Activated CD4-positive, alpha-beta T cell treated with anti-CD3 and anti-CD28 coated beads for 36 hours (primary cell): ENCODE measurements at regions of chr1 and their contacts with region 1.

Region 1: DNA sequence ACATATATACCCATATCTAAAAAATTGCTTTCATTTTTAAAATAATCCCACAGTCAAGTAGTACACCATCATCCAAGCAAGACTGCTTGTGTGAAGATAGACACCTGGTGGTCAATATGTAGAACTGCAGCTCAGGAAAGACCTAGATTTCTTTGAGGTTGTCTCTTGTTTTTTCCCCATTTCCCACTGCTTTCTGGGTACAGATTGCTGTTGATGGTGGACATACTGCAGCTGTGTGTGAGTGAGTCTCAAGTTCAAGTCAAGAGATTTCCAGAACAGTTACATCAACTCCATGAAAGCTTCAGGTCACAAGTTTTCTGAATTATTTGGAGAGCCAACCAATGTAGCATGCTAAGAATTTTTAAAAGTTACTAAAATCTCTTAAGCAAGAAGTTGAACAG is 306.4 kb downstream of the DUSP10 start:
- DNase-seq: no peak
- ATAC-seq: no peak
- H3K4me3 Mint-ChIP-seq: no peak overlapping the region
- H3K27ac Mint-ChIP-seq: no peak overlapping the region
- H3K4me1 Mint-ChIP-seq: peaks cover 39% of the 10 kb centered on the region
- H3K27me3 Mint-ChIP-seq: peaks cover 8% of the 10 kb centered on the region

Region 2: DNA sequence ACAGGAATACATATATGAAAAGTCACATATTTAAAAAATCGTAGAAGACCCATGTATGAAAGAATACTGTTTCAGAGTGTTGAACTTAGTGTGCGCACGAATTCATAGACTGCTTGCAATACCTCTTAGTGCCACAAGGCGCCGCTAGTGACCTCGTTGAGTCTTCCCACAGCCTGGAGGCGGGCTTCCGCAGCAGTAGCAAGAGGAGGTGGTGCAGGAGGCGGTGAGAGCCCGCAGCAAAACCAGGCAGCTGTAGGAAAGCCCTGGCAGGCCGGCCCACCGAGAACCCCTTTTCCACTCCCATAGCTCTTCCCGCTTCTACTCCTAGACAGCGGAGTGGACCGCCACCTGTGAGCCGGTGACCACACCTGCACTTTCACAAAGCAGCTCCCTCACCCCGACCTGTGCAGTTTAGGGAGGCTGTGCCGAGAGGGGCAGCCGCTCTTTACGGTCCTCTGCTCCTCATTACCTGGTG is 625.3 kb before region 1 on chr1:
- CTCF ChIA-PET with region 1: interaction called, 9 read pairs
- POLR2A ChIA-PET with region 1: no interaction called
- intact Hi-C with region 1: loop called (anchors 1 to 2 kb)
- DNase-seq: peak; percentile 86
- ATAC-seq: peak; percentile 94
- H3K4me3 Mint-ChIP-seq: peak overlapping the region; percentile 27
- H3K27ac Mint-ChIP-seq: no peak overlapping the region
- H3K4me1 Mint-ChIP-seq: peaks cover 6% of the 10 kb centered on the region
- H3K27me3 Mint-ChIP-seq: peaks cover 16% of the 10 kb centered on the region

Region 3: DNA sequence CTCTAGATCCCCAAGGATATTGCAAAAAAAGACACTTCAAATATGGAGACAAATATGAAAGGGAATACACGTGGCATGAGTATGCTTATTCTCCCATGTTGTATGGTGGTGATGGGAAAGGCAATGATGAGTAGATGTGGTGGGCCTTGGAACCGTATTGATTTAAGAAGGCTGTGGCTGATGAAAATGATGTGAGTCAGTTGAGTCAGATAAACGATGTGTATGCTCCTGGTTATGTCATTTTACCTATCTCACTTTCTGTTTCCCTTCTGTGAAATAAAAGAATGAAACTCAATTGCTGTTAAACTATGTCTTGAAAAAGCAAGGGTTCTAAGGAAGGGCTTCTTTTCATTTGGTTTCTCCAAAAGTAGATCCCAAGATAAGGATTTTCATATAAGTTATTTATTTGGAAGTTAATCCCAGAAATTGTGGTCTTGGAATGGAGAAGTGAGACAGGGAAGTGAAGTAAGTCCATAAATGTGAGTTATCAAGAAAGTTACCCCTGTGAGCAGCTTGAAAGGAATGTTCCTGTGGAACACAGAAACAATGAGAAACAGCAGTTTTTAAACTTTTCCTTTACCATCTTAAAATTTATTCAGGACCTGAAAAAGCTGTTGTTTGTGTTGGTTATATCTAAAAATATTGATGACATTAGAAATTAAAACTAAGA is 14.4 kb after region 1 on chr1:
- CTCF ChIA-PET with region 1: interaction called, 7 read pairs
- POLR2A ChIA-PET with region 1: no interaction called
- intact Hi-C with region 1: loop called (anchors 1 kb)
- DNase-seq: peak; percentile 22
- ATAC-seq: peak; percentile 97
- H3K4me3 Mint-ChIP-seq: no peak overlapping the region
- H3K27ac Mint-ChIP-seq: peak overlapping the region; percentile 63
- H3K4me1 Mint-ChIP-seq: peaks cover 14% of the 10 kb centered on the region
- H3K27me3 Mint-ChIP-seq: peaks cover 8% of the 10 kb centered on the region

Region 4: GRCh38 chr1:221753828-221754188 is 318.3 kb after region 1 on chr1:
- CTCF ChIA-PET with region 1: no interaction called
- POLR2A ChIA-PET with region 1: no interaction called
- intact Hi-C with region 1: loop called in 1 of 2 experiments (anchors 1 kb)
- DNase-seq: no peak
- ATAC-seq: peak; percentile 47
- H3K4me3 Mint-ChIP-seq: no peak overlapping the region
- H3K27ac Mint-ChIP-seq: peak overlapping the region; percentile 77
- H3K4me1 Mint-ChIP-seq: peaks cover 37% of the 10 kb centered on the region
- H3K27me3 Mint-ChIP-seq: peaks cover 5% of the 10 kb centered on the region

Region 5: GRCh38 chr1:221829327-221830015 is 394.0 kb after region 1 on chr1:
- CTCF ChIA-PET with region 1: no interaction called
- POLR2A ChIA-PET with region 1: no interaction called
- intact Hi-C with region 1: loop called in 1 of 2 experiments (anchors 2 kb)
- DNase-seq: peak; percentile 79
- ATAC-seq: peak; percentile 96
- H3K4me3 Mint-ChIP-seq: peak overlapping the region; percentile 31
- H3K27ac Mint-ChIP-seq: peak overlapping the region; percentile 86
- H3K4me1 Mint-ChIP-seq: peaks cover 55% of the 10 kb centered on the region
- H3K27me3 Mint-ChIP-seq: no peaks in the 10 kb centered on the region

Region 6: GRCh38 chr1:222617367-222617951 is 1182.0 kb after region 1 on chr1:
- CTCF ChIA-PET with region 1: no interaction called
- POLR2A ChIA-PET with region 1: no interaction called
- intact Hi-C with region 1: loop called in 1 of 2 experiments (anchors 10 kb)
- DNase-seq: peak; percentile 94
- ATAC-seq: peak; percentile 95
- H3K4me3 Mint-ChIP-seq: peak overlapping the region; percentile 83
- H3K27ac Mint-ChIP-seq: peak overlapping the region; percentile 88
- H3K4me1 Mint-ChIP-seq: peaks cover 31% of the 10 kb centered on the region
- H3K27me3 Mint-ChIP-seq: peaks cover 11% of the 10 kb centered on the region